T-cell (primary cell): ENCODE measurements at regions of chr15 and their contacts with region 1.

Region 1: GRCh38 chr15:78565097-78565951 is at the start of gene CHRNA5:
- DNase-seq: peak in 28 of 35 experiments; percentile 4 to 74 (median 30)
- ATAC-seq: peak; percentile 71 to 81 (median 72)
- H3K4me3 ChIP-seq: peak within 1 kb of the TSS; percentile 63 to 67
- H3K4me3 Mint-ChIP-seq: peak within 1 kb of the TSS; percentile 81 to 91 (median 84)
- H3K27ac ChIP-seq: no peak within 1 kb of the TSS
- H3K27ac Mint-ChIP-seq: peak within 1 kb of the TSS in 1 of 2 donors; percentile 3
- H3K4me1 ChIP-seq: peaks cover 6 to 17% of the 10 kb centered on the region in 2 experiments
- H3K4me1 Mint-ChIP-seq: peaks cover 19 to 20% (median 20%) of the 10 kb centered on the region in 3 donors
- H3K27me3 ChIP-seq: peaks cover 0 to 15% of the 10 kb centered on the region in 2 experiments
- H3K27me3 Mint-ChIP-seq: peaks cover 19 to 25% of the 10 kb centered on the region in 2 donors
- total RNA-seq, gene CHRNA5: 0.37 to 1.1 (median 0.57) TPM

Region 2: GRCh38 chr15:78540141-78540928 is 25.0 kb before region 1 on chr15 and contains the start of gene PSMA4:
- CTCF ChIA-PET with region 1: interaction called in 1 of 2 experiments, 11 read pairs
- POLR2A ChIA-PET with region 1: interaction called in 1 of 2 experiments, 3 read pairs
- DNase-seq: peak; percentile 81 to 96 (median 92)
- ATAC-seq: peak; percentile 87 to 88 (median 88)
- H3K4me3 ChIP-seq: peak within 1 kb of the TSS; percentile 83 to 89
- H3K4me3 Mint-ChIP-seq: peak within 1 kb of the TSS; percentile 87 to 96 (median 96)
- H3K27ac ChIP-seq: peak within 1 kb of the TSS; percentile 94
- H3K27ac Mint-ChIP-seq: peak within 1 kb of the TSS; percentile 98
- H3K4me1 ChIP-seq: peaks cover 16 to 28% of the 10 kb centered on the region in 2 experiments
- H3K4me1 Mint-ChIP-seq: peaks cover 24 to 33% (median 32%) of the 10 kb centered on the region in 3 donors
- H3K27me3 ChIP-seq: no peaks in the 10 kb centered on the region
- H3K27me3 Mint-ChIP-seq: no peaks in the 10 kb centered on the region
- total RNA-seq, gene PSMA4: 54.5 to 87.0 (median 80.7) TPM

Region 3: DNA sequence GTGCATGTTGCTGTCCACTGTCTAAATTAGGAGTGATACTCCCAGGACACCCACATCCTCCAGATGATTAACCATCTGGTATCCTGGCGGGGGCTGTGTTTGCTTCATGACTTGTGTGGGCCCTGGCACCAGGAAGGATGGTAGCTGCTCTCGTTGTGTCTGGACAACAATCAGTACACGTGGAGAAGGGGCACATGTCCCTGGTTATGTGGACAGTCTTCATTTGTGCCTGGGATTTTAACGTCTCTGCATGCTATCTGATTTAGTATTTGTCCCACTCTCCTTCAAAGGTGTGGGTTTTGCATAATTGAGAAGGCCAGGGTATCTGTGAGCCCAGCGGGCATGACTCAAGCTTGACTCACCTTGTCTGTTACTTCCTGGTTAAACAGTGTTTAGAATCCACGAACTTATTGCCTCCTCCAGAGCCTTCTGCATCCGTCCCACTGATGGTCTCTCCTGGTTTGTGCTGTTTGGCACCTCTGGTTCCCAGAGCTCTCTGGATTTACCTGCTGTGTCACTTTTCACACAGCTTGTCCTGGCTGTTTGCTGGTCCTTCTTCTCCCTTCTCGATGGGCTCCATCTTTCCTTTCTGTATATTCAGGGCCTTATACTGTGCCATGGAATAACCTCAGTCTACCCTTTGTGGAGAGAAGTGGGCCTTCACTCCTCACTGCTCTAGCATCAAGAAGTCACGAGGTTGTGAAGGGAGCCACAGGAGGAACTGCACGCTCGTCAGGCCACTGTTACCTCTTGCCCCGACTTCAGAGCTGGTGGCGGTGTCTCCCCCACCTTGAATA is 1871.4 kb after region 1 on chr15:
- CTCF ChIA-PET with region 1: no interaction called
- POLR2A ChIA-PET with region 1: no interaction called
- DNase-seq: no peak
- ATAC-seq: no peak
- H3K4me3 ChIP-seq: no peak overlapping the region
- H3K4me3 Mint-ChIP-seq: no peak overlapping the region
- H3K27ac ChIP-seq: no peak overlapping the region
- H3K27ac Mint-ChIP-seq: no peak overlapping the region
- H3K4me1 ChIP-seq: no peaks in the 10 kb centered on the region
- H3K4me1 Mint-ChIP-seq: no peaks in the 10 kb centered on the region
- H3K27me3 ChIP-seq: peaks cover 0 to 13% of the 10 kb centered on the region in 2 experiments
- H3K27me3 Mint-ChIP-seq: peaks cover 15 to 29% of the 10 kb centered on the region in 2 donors